ENCODE measurements at regions of chr6 and their contacts with region 1.

Region 1: DNA sequence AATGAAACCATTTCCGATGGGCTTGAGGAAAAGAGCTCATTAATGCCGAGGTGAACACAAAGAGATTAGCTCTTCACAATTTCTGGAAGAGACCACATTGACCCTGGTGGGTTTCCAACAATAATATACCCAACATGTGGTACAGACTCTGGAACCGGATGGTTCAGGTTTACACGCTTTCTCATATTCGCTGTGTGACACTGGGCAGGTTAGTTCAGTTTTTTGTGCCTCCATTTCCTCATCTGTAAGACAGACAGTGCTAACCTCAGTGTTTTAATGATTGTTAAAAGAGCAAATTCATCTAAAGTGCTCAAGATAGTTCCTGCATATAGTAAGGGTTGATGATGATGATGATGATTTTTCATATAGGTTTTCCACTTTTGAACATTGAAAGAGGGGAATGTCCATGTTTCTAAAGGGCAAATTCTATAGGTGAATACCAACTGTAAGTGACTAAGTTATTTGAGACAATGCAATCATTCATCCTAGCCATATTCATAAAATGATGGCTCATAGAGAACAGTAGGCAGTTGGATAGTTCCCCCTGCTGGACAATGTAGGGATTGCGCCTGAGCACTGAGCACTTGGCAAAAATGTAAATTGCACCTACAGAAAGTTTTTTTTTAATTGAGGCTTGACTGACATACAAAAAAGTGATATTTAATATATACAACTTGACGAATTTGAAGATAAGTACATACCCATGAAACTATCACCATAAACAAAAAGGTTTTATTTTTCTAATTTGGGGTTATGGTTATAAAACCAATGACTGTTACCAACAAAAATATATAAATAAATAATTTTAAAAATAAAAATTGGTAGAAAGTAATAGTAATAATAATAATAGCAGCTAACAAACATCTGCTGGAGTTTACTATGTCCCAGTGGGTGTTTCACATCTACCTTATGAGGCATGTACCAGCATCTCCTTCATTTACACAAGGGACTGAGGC is 2.1 kb upstream of the PERP start:
- H3K4me3 ChIP-seq: no peak overlapping the region
- H3K27ac ChIP-seq: no peak overlapping the region
- H3K4me1 ChIP-seq: peaks cover 11% of the 10 kb centered on the region
- CTCF ChIP-seq: no peak

Region 2: GRCh38 chr6:138012682-138013081 is 96.6 kb before region 1 on chr6:
- CTCF ChIA-PET with region 1: interaction called, 188 read pairs
- POLR2A ChIA-PET with region 1: interaction called, 36 read pairs
- H3K4me3 ChIP-seq: no peak overlapping the region
- H3K27ac ChIP-seq: no peak overlapping the region
- H3K4me1 ChIP-seq: no peaks in the 10 kb centered on the region
- CTCF ChIP-seq: no peak

Region 3: DNA sequence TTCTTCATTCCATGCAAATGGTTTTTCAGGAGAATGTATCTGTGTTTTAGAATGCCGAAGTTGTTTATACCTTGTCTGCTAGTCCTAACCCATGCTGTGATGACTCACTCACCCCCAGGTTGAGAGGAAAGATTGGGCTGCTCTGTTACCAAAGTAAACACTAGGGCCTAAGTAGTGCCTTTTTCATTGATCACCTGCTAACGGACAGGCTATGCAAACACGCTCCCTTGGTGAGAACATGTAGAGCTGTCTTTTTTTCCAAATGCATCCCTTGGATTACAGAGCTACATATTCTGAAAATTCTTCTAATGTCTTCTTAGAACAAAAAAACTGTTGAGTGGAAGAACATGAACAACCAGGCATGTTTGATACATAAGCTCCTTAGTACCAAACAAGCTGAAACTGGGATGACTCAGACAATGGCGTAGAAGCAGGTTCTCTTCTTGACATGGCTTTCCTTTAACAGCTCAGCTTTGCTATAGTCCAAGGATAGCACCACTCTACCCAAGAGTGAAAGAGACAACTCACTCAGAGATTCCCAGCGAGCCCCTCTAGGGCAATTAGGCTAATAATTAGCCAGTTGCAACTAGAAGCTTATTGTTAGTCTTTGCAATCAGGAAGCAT is 22.6 kb before region 1 on chr6:
- CTCF ChIA-PET with region 1: interaction called, 6 read pairs
- POLR2A ChIA-PET with region 1: interaction called, 12 read pairs
- H3K4me3 ChIP-seq: no peak overlapping the region
- H3K27ac ChIP-seq: peak overlapping the region; percentile 50
- H3K4me1 ChIP-seq: peaks cover 35% of the 10 kb centered on the region
- CTCF ChIP-seq: no peak

Region 4: DNA sequence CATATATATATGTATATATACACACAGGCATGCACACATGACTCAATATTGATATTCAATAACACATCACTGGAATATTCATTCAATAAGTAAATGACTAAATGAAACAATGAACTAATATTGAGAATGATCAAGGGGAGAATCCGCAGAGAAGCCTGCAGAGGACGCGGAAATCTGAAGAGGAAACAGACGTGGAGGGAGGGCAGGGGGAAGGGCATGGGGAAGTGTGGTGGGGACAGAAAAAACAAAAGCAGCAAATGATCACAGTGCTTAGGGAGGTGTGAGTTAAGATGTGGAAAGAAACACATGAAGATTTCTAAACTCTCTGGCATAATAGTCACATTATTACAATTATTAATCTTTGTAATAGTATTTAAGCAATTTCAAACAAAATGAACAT is 16.6 kb before region 1 on chr6:
- CTCF ChIA-PET with region 1: interaction called, 11 read pairs
- POLR2A ChIA-PET with region 1: interaction called, 3 read pairs
- H3K4me3 ChIP-seq: no peak overlapping the region
- H3K27ac ChIP-seq: no peak overlapping the region
- H3K4me1 ChIP-seq: peaks cover 20% of the 10 kb centered on the region
- CTCF ChIP-seq: no peak

Region 5: GRCh38 chr6:138194287-138194686 is 85.0 kb after region 1 on chr6:
- CTCF ChIA-PET with region 1: no interaction called
- POLR2A ChIA-PET with region 1: no interaction called
- H3K4me3 ChIP-seq: no peak overlapping the region
- H3K27ac ChIP-seq: no peak overlapping the region
- H3K4me1 ChIP-seq: peaks cover under 1% of the 10 kb centered on the region; the same call in 1 of the 2 replicates
- CTCF ChIP-seq: no peak